ENCODE measurements at regions of chr1 and their contacts with region 1.

Region 1: DNA sequence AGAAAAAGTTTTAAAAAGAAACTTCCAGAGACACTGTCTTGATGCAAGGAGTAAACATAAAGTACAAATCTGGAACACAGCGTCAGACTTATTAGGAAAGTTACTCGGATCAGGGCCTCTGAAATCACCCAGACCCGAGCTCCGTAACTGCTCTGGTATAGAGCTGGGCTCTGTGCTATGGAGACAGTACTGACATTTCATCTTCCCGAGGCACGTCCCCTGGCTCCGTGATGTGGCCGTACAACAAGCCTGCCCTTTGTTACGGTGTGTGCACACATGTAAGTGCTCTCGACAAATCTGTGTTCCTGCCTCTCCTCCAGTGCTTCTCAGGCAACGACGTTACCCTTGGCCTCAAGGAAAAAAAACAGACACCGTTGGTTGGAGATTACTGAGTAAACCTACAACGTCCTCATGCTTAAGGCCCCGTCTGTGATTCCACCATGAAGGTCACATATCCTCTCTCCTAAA is 107.0 kb upstream of the IRF2BP2 start:
- DNase-seq: peak; percentile 81
- ATAC-seq: peak; percentile 62
- H3K4me3 ChIP-seq: peak overlapping the region; percentile 52 to 75 (median 62)
- H3K27ac ChIP-seq: peak overlapping the region; percentile 99
- H3K4me1 ChIP-seq: peaks cover 98% of the 10 kb centered on the region
- H3K27me3 ChIP-seq: no peaks in the 10 kb centered on the region; a peak in 1 of 5 replicates
- CTCF ChIP-seq: no peak
- EP300 ChIP-seq: no peak
- POLR2A ChIP-seq: peak; percentile 64 to 68; a peak in 3 of 4 replicates
- RAD21 ChIP-seq: no peak

Region 2: DNA sequence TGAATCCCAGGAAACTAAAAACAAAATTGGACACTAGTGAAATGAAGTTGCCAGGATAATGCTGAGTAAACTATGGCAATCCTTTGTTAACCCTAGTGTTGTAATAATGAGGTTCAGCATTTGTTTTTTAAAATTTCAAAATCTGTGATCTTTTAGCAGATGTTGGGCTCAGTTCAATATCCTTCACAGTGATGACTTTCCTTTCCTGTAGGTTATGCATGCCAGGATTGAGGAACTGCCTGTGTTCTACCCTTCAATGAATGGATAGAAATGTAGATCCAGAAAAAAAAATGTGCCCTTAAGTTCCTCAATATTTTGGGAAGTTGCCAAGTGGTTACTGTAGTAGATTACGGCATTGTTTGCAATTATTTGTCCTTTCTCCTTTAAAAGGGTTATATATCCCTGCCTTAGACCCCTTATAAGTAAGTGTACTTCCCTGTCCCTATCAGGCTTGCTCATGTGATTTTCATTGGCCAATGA is 71.4 kb before region 1 on chr1:
- CTCF ChIA-PET with region 1: no interaction called
- POLR2A ChIA-PET with region 1: interaction called, 89 read pairs
- in situ Hi-C with region 1: no loop called
- intact Hi-C with region 1: loop called (anchors 1 kb)
- DNase-seq: no peak
- ATAC-seq: no peak
- H3K4me3 ChIP-seq: no peak overlapping the region
- H3K27ac ChIP-seq: peak overlapping the region; percentile 83
- H3K4me1 ChIP-seq: peaks cover 63% of the 10 kb centered on the region
- H3K27me3 ChIP-seq: no peaks in the 10 kb centered on the region
- CTCF ChIP-seq: no peak
- EP300 ChIP-seq: no peak
- POLR2A ChIP-seq: no peak
- RAD21 ChIP-seq: no peak

Region 3: DNA sequence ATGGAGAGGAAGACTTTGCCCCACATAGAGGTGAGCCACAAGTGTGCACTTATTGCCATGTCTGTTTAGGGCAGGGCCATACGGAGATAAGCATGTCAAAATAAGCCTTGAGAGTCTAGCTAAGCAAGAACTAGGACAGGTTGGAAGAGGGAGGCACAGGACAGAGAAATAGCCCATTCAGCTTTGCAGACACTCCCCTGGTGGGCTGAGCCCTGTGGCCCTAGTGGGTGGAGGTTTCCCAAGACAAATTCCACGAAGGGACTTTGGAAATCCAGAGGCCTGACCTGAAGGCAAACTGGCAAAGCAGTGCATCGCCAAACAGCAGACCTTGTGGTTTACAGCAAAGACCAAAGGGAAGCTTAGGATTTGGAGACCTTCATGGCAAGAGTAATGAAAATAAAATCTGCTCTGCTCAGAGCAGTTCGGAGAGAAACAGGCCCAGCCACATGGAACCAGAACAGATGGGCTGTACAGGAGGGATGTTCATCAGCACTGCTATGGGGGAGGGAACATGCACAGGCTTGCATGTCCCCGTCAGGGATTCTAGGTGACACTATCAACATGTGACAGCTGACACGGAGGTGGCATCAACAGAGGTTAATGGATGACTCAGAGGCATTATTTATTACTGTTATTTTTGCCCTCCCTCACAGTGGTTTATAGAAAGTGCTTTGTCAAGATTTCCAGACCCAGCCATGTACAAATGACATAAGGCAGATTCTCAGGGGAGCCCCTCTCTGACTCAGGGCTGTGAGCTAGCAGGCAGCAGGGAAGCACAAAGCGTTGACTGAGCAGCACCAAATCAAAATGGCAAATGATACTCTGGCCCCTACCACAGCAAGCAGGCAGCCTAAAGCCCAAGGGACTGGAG is 16.9 kb before region 1 on chr1:
- CTCF ChIA-PET with region 1: no interaction called
- POLR2A ChIA-PET with region 1: interaction called, 34 read pairs
- in situ Hi-C with region 1: no loop called
- intact Hi-C with region 1: no loop called
- DNase-seq: no peak
- ATAC-seq: peak; percentile 73
- H3K4me3 ChIP-seq: no peak overlapping the region
- H3K27ac ChIP-seq: peak overlapping the region; percentile 21
- H3K4me1 ChIP-seq: peaks cover 29% of the 10 kb centered on the region
- H3K27me3 ChIP-seq: no peaks in the 10 kb centered on the region
- CTCF ChIP-seq: no peak
- EP300 ChIP-seq: no peak
- POLR2A ChIP-seq: no peak
- RAD21 ChIP-seq: no peak

Region 4: DNA sequence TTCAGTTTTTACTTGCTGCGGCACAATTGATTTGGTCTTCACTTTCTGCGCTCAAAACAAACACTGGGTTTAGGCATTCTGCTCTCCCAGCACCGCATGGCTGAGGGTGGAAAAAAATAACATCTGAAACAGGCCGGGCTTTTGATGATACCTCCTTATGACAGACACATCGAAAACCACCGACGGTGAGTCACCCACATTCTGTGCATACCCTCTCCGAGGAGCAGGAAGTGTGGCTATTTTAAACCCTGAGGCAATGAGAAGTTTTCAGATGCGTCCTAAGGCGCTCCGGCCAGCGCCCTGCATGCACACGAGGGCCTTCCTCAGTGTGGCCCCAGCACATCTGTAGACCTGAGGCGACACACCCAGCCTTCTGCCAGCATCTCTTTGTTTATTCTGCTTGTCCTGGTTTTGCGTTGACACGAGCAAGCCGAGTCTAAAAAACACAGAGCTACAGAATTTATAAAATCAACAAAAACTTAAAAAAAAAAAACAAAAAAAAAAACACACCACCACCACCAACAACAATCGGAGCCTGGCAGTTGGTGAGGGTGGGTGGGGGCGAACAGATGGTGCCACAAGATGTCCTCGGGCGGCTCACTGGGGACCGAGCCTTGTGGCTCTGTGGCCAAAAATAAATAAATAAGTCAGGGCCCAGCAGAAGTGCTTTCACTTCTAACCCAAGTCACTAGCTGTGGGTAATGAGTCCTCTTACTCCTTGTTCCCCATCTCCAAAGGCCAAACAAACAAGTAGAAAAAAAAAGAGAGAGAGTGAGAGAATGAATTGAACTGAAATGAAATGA is 55.6 kb after region 1 on chr1:
- CTCF ChIA-PET with region 1: no interaction called
- POLR2A ChIA-PET with region 1: interaction called, 84 read pairs
- in situ Hi-C with region 1: no loop called
- intact Hi-C with region 1: no loop called
- DNase-seq: peak; percentile 93
- ATAC-seq: peak; percentile 66
- H3K4me3 ChIP-seq: no peak overlapping the region
- H3K27ac ChIP-seq: peak overlapping the region; percentile 73
- H3K4me1 ChIP-seq: peaks cover 61% of the 10 kb centered on the region
- H3K27me3 ChIP-seq: peaks cover 0 to 7% of the 10 kb centered on the region in 2 experiments; a peak in 2 of 5 replicates
- CTCF ChIP-seq: no peak
- EP300 ChIP-seq: peak; percentile 25 to 87; a peak in 2 of 4 replicates
- POLR2A ChIP-seq: 0 out of 4 replicates have a peak, but pooled peaks of 1 of the 2 experiments have one; percentile 28
- RAD21 ChIP-seq: 0 out of 2 replicates have a peak, but pooled peaks have one; percentile 21

Region 5: DNA sequence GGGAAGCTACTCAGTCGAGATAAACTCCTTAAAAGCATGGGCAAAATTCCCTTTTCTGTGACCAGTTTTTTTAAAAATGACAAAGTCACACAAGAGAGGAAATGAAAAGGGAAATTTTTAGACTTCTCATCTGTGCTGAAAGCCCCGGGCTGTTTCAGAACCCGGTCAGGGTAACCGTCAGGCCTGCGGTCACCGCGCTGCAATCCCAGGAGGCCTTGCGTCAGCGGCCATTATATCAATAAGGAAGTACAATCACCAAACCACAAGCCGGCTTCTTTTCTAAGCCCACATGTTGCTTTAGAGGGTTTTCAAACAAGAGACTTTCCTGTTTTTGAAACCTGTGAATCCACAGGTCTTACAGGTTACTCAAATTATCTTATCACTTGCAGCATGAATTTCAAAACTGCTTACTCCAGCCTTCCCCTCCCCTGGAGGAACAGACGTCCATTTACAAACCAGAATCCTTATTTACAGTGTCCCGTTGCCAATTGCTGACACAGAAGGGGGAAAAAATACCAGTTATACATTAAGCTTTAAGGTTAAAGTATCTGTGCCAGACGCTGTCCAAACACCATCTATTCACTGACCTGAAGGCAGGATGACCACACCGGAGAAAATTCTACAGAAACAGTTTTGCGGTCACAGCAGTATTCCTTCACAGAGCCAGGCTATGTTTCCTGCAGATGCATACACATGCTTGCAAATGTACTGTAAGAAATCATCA is 246.4 kb after region 1 on chr1:
- CTCF ChIA-PET with region 1: no interaction called
- POLR2A ChIA-PET with region 1: interaction called, 86 read pairs
- in situ Hi-C with region 1: no loop called
- intact Hi-C with region 1: no loop called
- DNase-seq: peak; percentile 99
- ATAC-seq: peak; percentile 70
- H3K4me3 ChIP-seq: peak overlapping the region in 2 of 3 experiments; percentile 33 to 55; a peak in 2 of 6 replicates
- H3K27ac ChIP-seq: peak overlapping the region; percentile 100
- H3K4me1 ChIP-seq: peaks cover 78% of the 10 kb centered on the region
- H3K27me3 ChIP-seq: no peaks in the 10 kb centered on the region
- CTCF ChIP-seq: no peak
- EP300 ChIP-seq: peak in 1 of 2 experiments; percentile 98; a peak in 2 of 4 replicates
- POLR2A ChIP-seq: peak; percentile 70 to 80
- RAD21 ChIP-seq: peak; percentile 26; the same call in 1 of the 2 replicates